ENCODE measurements at regions of chr10 and their contacts with region 1.

Region 1: GRCh38 chr10:59906417-59907202 is at the start of gene CCDC6:
- DNase-seq: no peak
- ATAC-seq: peak; percentile 86
- H3K4me3 ChIP-seq: peak within 1 kb of the TSS; percentile 94
- H3K27ac ChIP-seq: peak within 1 kb of the TSS; percentile 88
- H3K4me1 ChIP-seq: peaks cover 8% of the 10 kb centered on the region; the same call in 1 of the 2 replicates
- H3K27me3 ChIP-seq: no peaks in the 10 kb centered on the region
- CTCF ChIP-seq: peak; percentile 63 to 84 (median 83)
- EP300 ChIP-seq: 0 out of 4 replicates have a peak, but pooled peaks of 1 of the 2 experiments have one; percentile 8
- POLR2A ChIP-seq: peak; percentile 86
- RAD21 ChIP-seq: peak; percentile 88
- polyA plus RNA-seq, gene CCDC6: 11.8 to 12.3 TPM

Region 2: DNA sequence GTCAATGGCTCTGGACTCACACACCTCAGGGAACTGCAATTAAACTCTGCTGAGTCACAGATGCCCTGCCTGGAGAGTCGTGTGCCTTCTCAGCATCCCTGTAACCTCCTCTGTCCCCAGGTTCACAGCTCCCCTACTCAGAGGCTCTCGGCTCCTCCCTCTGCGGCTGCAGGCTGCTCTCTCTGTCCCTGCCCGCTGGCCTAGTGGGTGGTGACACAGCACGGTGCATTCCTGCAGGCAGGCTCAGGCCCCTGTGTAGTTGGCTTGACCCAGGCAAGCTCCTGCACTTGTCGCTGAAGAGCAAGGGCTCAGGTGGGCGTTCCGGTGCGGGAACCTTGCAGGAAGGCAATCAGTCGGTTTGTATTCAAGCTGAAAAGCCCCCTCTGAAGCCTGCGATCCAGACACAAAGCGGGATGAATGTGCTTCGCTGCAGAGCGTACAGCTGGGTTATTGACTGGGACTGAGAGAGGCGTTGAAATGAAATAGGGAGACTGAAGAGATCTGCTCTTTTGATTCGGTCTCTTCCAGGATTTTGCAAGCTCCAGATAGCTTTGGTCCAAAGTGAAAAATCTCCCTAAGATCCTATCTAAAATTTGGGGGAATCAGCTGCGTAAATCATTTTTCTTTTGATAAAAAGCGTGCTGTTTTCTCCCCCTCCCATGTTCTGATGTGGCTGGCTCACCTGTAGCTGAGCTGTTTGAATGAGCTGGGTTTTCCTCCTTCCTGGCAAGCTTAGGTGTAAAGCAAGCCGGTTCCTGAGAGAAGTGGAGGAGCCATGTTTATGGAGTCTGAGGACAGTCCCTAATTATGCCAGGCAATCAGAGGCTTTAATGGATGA is 938.8 kb before region 1 on chr10:
- CTCF ChIA-PET with region 1: no interaction called
- POLR2A ChIA-PET with region 1: no interaction called
- RAD21 ChIA-PET with region 1: no interaction called
- SMC1A ChIA-PET with region 1: no interaction called
- in situ Hi-C with region 1: no loop called
- intact Hi-C with region 1: loop called (anchors 10 kb)
- DNase-seq: no peak
- ATAC-seq: peak; percentile 88
- H3K4me3 ChIP-seq: no peak overlapping the region
- H3K27ac ChIP-seq: no peak overlapping the region
- H3K4me1 ChIP-seq: no peaks in the 10 kb centered on the region
- H3K27me3 ChIP-seq: no peaks in the 10 kb centered on the region
- CTCF ChIP-seq: no peak
- EP300 ChIP-seq: no peak
- POLR2A ChIP-seq: no peak
- RAD21 ChIP-seq: no peak

Region 3: DNA sequence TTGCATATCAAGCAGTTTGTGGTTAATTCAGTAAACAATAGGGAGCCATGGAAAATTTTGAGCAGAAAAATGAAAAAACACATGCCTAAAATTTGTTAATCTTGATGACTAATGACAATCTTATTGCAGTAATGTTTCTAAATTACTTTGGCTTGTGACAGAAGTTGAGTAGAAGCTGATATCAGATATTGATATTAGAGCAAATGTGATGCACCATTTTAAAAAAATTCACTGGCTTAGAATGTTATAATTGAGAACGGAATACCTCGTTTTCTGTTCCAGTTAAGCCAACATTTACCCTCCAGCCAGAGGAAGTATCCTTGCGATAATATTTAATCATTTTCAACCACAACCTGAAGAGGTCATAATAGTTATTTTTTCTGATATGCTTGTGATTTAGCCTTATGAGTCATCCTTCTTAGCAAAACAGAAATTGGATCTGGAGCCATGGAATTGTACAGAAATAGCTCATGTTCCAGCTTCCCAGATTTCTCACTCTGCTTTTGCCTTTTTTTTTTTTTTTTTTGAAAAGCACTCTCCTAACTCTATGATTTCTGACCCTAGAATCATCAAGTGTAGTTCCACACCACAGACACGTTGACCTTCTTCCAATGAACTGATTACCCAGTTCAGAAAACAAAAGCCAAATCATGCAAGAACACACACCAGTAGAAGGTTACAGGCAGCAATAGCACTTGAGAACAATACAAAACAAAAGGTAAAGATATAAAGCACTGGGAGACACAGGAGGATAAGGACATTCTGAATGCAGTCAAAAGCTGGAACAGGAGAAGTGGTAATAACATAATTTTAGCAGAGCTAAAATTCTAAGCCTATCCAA is 827.0 kb before region 1 on chr10:
- CTCF ChIA-PET with region 1: no interaction called
- POLR2A ChIA-PET with region 1: no interaction called
- RAD21 ChIA-PET with region 1: no interaction called
- SMC1A ChIA-PET with region 1: no interaction called
- in situ Hi-C with region 1: no loop called
- intact Hi-C with region 1: no loop called
- DNase-seq: no peak
- ATAC-seq: no peak
- H3K4me3 ChIP-seq: no peak overlapping the region
- H3K27ac ChIP-seq: no peak overlapping the region
- H3K4me1 ChIP-seq: 0 out of 2 replicates have a peak, but pooled peaks cover 3% of the 10 kb centered on the region
- H3K27me3 ChIP-seq: no peaks in the 10 kb centered on the region
- CTCF ChIP-seq: no peak
- EP300 ChIP-seq: no peak
- POLR2A ChIP-seq: no peak
- RAD21 ChIP-seq: no peak

Region 4: GRCh38 chr10:59872892-59873463 is 33.6 kb before region 1 on chr10:
- CTCF ChIA-PET with region 1: interaction called, 181 read pairs
- POLR2A ChIA-PET with region 1: interaction called, 13 read pairs
- RAD21 ChIA-PET with region 1: interaction called, 140 read pairs
- SMC1A ChIA-PET with region 1: interaction called, 143 read pairs
- in situ Hi-C with region 1: no loop called
- intact Hi-C with region 1: no loop called
- DNase-seq: no peak
- ATAC-seq: no peak
- H3K4me3 ChIP-seq: no peak overlapping the region
- H3K27ac ChIP-seq: no peak overlapping the region
- H3K4me1 ChIP-seq: peaks cover 26% of the 10 kb centered on the region; the same call in 1 of the 2 replicates
- H3K27me3 ChIP-seq: no peaks in the 10 kb centered on the region
- CTCF ChIP-seq: no peak
- EP300 ChIP-seq: no peak
- POLR2A ChIP-seq: no peak
- RAD21 ChIP-seq: no peak

Region 5: GRCh38 chr10:59894114-59894513 is 12.5 kb before region 1 on chr10:
- CTCF ChIA-PET with region 1: interaction called, 8 read pairs
- POLR2A ChIA-PET with region 1: interaction called, 4 read pairs
- RAD21 ChIA-PET with region 1: interaction called, 18 read pairs
- SMC1A ChIA-PET with region 1: interaction called, 62 read pairs
- in situ Hi-C with region 1: no loop called
- intact Hi-C with region 1: no loop called
- DNase-seq: no peak
- ATAC-seq: no peak
- H3K4me3 ChIP-seq: no peak overlapping the region
- H3K27ac ChIP-seq: no peak overlapping the region
- H3K4me1 ChIP-seq: peaks cover 15% of the 10 kb centered on the region
- H3K27me3 ChIP-seq: no peaks in the 10 kb centered on the region
- CTCF ChIP-seq: no peak
- EP300 ChIP-seq: no peak
- POLR2A ChIP-seq: no peak
- RAD21 ChIP-seq: no peak

Region 6: GRCh38 chr10:60099998-60100747 is 193.6 kb after region 1 on chr10:
- CTCF ChIA-PET with region 1: no interaction called
- POLR2A ChIA-PET with region 1: interaction called, 3 read pairs
- RAD21 ChIA-PET with region 1: no interaction called
- SMC1A ChIA-PET with region 1: no interaction called
- in situ Hi-C with region 1: no loop called
- intact Hi-C with region 1: loop called (anchors 5 kb)
- DNase-seq: no peak
- ATAC-seq: peak; percentile 73
- H3K4me3 ChIP-seq: no peak overlapping the region
- H3K27ac ChIP-seq: no peak overlapping the region
- H3K4me1 ChIP-seq: peaks cover 9% of the 10 kb centered on the region
- H3K27me3 ChIP-seq: no peaks in the 10 kb centered on the region
- CTCF ChIP-seq: peak; percentile 51 to 55 (median 54); a peak in 5 of 6 replicates
- EP300 ChIP-seq: no peak
- POLR2A ChIP-seq: no peak
- RAD21 ChIP-seq: peak; percentile 66